Transverse colon (tissue), 4 donors: ENCODE measurements at regions of chr12 and their contacts with region 1.

Region 1: GRCh38 chr12:26097046-26097878 is 27.6 kb downstream of the BHLHE41 start:
- DNase-seq: peak; percentile 72
- H3K4me3 ChIP-seq: no peak overlapping the region
- H3K27ac ChIP-seq: no peak overlapping the region
- H3K4me1 ChIP-seq: peaks cover 0 to 14% (median 4%) of the 10 kb centered on the region in 4 donors
- H3K27me3 ChIP-seq: no peaks in the 10 kb centered on the region
- CTCF ChIP-seq: peak; percentile 82 to 93 (median 90)
- EP300 ChIP-seq: no peak
- POLR2A ChIP-seq: no peak

Region 2: GRCh38 chr12:25151476-25151875 is 945.8 kb before region 1 on chr12:
- in situ Hi-C with region 1: no loop called
- intact Hi-C with region 1: no loop called
- DNase-seq: peak; percentile 39
- H3K4me3 ChIP-seq: no peak overlapping the region
- H3K27ac ChIP-seq: peak overlapping the region in 1 of 4 donors; percentile 8
- H3K4me1 ChIP-seq: peaks cover 0 to 6% (median 1%) of the 10 kb centered on the region in 4 donors
- H3K27me3 ChIP-seq: no peaks in the 10 kb centered on the region
- CTCF ChIP-seq: no peak
- EP300 ChIP-seq: no peak
- POLR2A ChIP-seq: no peak

Region 3: GRCh38 chr12:26389348-26389747 is 292.1 kb after region 1 on chr12:
- in situ Hi-C with region 1: no loop called
- intact Hi-C with region 1: no loop called
- DNase-seq: no peak
- H3K4me3 ChIP-seq: no peak overlapping the region
- H3K27ac ChIP-seq: no peak overlapping the region
- H3K4me1 ChIP-seq: no peaks in the 10 kb centered on the region
- H3K27me3 ChIP-seq: no peaks in the 10 kb centered on the region
- CTCF ChIP-seq: no peak
- EP300 ChIP-seq: no peak
- POLR2A ChIP-seq: no peak

Region 4: DNA sequence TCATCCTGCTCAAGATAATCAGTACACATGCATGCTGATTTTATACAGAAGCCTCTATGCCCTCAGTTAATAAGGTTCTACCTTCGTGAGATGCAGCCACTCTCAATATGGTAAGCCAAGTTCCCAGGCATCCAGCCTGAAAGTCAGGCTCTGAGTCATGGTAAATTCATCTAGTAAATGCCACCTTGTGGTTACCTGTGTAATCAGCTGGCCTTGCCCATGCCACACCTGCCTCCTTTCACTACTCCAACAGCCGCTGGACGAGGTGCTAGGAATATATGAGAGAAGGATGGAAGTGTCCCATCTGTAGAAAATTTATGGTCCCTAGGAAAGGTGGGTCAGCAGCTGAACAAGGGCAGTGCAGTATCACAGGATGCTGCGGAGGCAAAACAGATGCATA is 305.4 kb after region 1 on chr12:
- in situ Hi-C with region 1: loop called in 3 of 4 experiments (anchors 25 kb)
- intact Hi-C with region 1: no loop called
- DNase-seq: peak; percentile 46
- H3K4me3 ChIP-seq: no peak overlapping the region
- H3K27ac ChIP-seq: no peak overlapping the region
- H3K4me1 ChIP-seq: no peaks in the 10 kb centered on the region
- H3K27me3 ChIP-seq: no peaks in the 10 kb centered on the region
- CTCF ChIP-seq: peak; percentile 28 to 68 (median 45)
- EP300 ChIP-seq: no peak
- POLR2A ChIP-seq: no peak

Region 5: GRCh38 chr12:26629864-26630263 is 532.6 kb after region 1 on chr12:
- in situ Hi-C with region 1: loop called in 2 of 4 experiments (anchors 25 kb)
- intact Hi-C with region 1: no loop called
- DNase-seq: no peak
- H3K4me3 ChIP-seq: no peak overlapping the region
- H3K27ac ChIP-seq: peak overlapping the region in 2 of 4 donors; percentile 38 to 52
- H3K4me1 ChIP-seq: peaks cover 0 to 4% (median 0%) of the 10 kb centered on the region in 4 donors
- H3K27me3 ChIP-seq: no peaks in the 10 kb centered on the region
- CTCF ChIP-seq: peak in 4 of 5 experiments; percentile 14 to 36 (median 24)
- EP300 ChIP-seq: no peak
- POLR2A ChIP-seq: no peak

Region 6: DNA sequence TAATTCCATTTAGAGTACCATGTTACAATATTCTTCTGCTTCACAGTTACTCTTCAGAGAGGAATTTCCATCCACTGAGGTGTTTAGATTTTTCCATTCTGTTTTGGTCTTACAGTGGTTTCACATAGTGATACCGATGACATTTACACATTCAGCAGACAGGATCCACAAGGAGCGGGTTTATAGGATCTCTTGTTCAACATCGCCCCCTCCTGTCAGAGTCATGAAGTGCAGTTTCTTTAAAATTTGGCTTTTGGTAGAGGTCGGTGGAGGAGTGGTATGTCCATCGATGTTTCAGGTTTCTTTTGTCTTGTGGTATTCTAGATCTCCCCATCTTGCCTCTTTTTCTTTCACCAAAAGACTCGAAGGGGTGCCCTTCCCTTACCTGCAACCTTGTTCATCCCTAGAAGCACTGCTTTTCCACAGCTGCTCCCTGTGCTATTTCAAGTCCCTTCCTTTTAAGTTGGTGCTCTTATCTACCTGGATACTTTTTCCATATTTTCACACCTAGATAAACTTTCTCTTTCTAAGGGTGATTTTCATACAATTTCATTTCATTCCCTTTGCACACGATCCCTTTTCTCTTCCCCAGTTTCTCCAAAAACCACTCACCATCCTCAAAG is 554.4 kb after region 1 on chr12:
- in situ Hi-C with region 1: loop called (anchors 10 to 25 kb)
- intact Hi-C with region 1: no loop called
- DNase-seq: peak; percentile 46
- H3K4me3 ChIP-seq: no peak overlapping the region
- H3K27ac ChIP-seq: no peak overlapping the region
- H3K4me1 ChIP-seq: peaks cover 0 to 5% (median 0%) of the 10 kb centered on the region in 4 donors
- H3K27me3 ChIP-seq: no peaks in the 10 kb centered on the region
- CTCF ChIP-seq: peak; percentile 71 to 83 (median 72)
- EP300 ChIP-seq: no peak
- POLR2A ChIP-seq: no peak